Activated CD4-positive, alpha-beta T cell treated with anti-CD3 and anti-CD28 coated beads for 36 hours (primary cell): ENCODE measurements at regions of chr22 and their contacts with region 1.

Region 1: GRCh38 chr22:40036591-40037225 is 42.0 kb downstream of the FAM83F start:
- DNase-seq: peak; percentile 79
- ATAC-seq: peak; percentile 90
- H3K4me3 Mint-ChIP-seq: no peak overlapping the region
- H3K27ac Mint-ChIP-seq: no peak overlapping the region
- H3K4me1 Mint-ChIP-seq: no peaks in the 10 kb centered on the region
- H3K27me3 Mint-ChIP-seq: peaks cover 2% of the 10 kb centered on the region

Region 2: DNA sequence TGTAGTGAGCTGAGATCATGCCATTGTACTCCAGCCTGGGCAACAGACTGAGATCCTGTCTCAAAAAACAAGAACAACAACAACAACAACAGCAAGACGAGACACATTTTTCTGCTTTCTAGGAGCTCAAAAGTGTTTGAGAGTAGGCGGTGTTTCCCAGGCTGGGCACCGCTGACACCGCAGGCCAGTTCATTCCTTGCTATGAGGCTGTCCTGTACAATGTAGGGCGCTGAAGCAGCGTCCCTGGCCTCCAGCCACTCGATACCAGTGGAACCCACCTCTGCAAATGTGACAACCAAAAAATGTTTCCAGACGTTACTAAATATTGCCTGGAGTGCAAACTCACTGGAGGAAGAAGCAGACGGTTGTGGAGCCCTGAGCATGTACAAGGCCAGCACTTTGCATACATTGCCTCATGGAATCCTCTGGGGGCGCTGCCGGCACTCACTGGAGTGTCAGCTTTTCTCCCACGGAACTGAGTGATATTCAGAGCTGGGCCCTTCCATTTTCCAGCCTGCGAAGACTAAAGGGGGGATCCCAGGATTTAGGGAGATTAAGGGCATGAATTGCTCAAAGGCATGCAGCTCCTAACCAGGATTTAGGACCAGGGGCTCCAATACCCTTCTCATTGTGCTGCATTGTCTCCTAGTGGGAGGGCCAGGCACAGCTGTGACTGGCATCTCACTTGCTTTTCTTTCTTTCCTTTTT is 540.4 kb before region 1 on chr22:
- CTCF ChIA-PET with region 1: interaction called, 13 read pairs
- POLR2A ChIA-PET with region 1: no interaction called
- intact Hi-C with region 1: loop called in 1 of 2 experiments (anchors 1 kb)
- DNase-seq: peak; percentile 85
- ATAC-seq: peak; percentile 89
- H3K4me3 Mint-ChIP-seq: no peak overlapping the region
- H3K27ac Mint-ChIP-seq: no peak overlapping the region
- H3K4me1 Mint-ChIP-seq: peaks cover 13% of the 10 kb centered on the region
- H3K27me3 Mint-ChIP-seq: no peaks in the 10 kb centered on the region

Region 3: GRCh38 chr22:39537975-39538374 is 498.7 kb before region 1 on chr22:
- CTCF ChIA-PET with region 1: interaction called, 18 read pairs
- POLR2A ChIA-PET with region 1: interaction called, 3 read pairs
- intact Hi-C with region 1: loop called (anchors 1 to 2 kb)
- DNase-seq: no peak
- ATAC-seq: no peak
- H3K4me3 Mint-ChIP-seq: no peak overlapping the region
- H3K27ac Mint-ChIP-seq: no peak overlapping the region
- H3K4me1 Mint-ChIP-seq: peaks cover 6% of the 10 kb centered on the region
- H3K27me3 Mint-ChIP-seq: no peaks in the 10 kb centered on the region

Region 4: DNA sequence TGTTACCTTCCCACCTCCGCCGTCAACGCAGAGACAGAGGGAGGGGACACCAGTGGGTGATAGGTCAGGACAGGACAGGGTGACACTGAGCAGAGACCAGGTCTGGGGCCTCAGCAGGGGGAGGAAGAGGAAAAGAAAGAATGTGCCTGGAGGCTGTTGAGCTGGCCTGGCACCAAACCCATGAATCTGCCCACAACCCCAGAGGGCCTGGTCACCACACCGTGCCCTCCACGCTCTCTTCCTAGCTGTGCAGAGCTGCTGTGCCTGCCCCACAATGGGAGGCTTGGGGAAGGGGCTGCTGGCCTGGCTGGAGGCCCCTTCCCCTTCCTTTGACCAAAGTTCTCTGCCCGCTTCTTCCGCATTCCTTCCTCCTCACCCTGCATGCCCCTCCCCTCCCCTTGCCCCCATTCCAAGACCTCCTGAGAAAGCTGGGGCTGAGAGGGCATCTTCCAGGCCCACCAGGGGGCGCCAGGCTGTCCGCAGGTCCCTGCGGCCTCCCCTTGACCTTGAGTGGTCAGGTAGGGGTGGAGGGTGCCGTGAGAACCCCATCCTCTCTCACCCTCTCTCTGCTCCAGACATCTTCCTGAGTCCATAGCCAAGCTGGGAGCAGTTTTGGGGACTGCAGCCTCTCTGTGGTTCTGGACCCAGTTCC is 477.1 kb before region 1 on chr22:
- CTCF ChIA-PET with region 1: no interaction called
- POLR2A ChIA-PET with region 1: no interaction called
- intact Hi-C with region 1: loop called in 1 of 2 experiments (anchors 5 kb)
- DNase-seq: peak; percentile 44
- ATAC-seq: no peak
- H3K4me3 Mint-ChIP-seq: no peak overlapping the region
- H3K27ac Mint-ChIP-seq: no peak overlapping the region
- H3K4me1 Mint-ChIP-seq: peaks cover 2% of the 10 kb centered on the region
- H3K27me3 Mint-ChIP-seq: peaks cover 19% of the 10 kb centered on the region

Region 5: GRCh38 chr22:39622881-39623367 is 413.8 kb before region 1 on chr22:
- CTCF ChIA-PET with region 1: interaction called, 3 read pairs
- POLR2A ChIA-PET with region 1: no interaction called
- intact Hi-C with region 1: loop called in 1 of 2 experiments (anchors 1 kb)
- DNase-seq: peak; percentile 84
- ATAC-seq: peak; percentile 76
- H3K4me3 Mint-ChIP-seq: no peak overlapping the region
- H3K27ac Mint-ChIP-seq: no peak overlapping the region
- H3K4me1 Mint-ChIP-seq: peaks cover 12% of the 10 kb centered on the region
- H3K27me3 Mint-ChIP-seq: peaks cover 3% of the 10 kb centered on the region

Region 6: GRCh38 chr22:39999144-39999757 is 37.5 kb before region 1 on chr22:
- CTCF ChIA-PET with region 1: no interaction called
- POLR2A ChIA-PET with region 1: no interaction called
- intact Hi-C with region 1: no loop called
- DNase-seq: peak; percentile 30
- ATAC-seq: peak; percentile 17
- H3K4me3 Mint-ChIP-seq: no peak overlapping the region
- H3K27ac Mint-ChIP-seq: no peak overlapping the region
- H3K4me1 Mint-ChIP-seq: peaks cover 1% of the 10 kb centered on the region
- H3K27me3 Mint-ChIP-seq: no peaks in the 10 kb centered on the region